ENCODE measurements at regions of chr7 and their contacts with region 1.

Region 1: GRCh38 chr7:23471106-23471859 is 992 bp upstream of the IGF2BP3 start:
- DNase-seq: peak; percentile 72
- ATAC-seq: peak; percentile 55
- H3K4me3 ChIP-seq: peak overlapping the region; percentile 75 to 77
- H3K27ac ChIP-seq: peak overlapping the region; percentile 97
- H3K4me1 ChIP-seq: peaks cover 34 to 49% of the 10 kb centered on the region in 2 experiments
- H3K27me3 ChIP-seq: peaks cover 12% of the 10 kb centered on the region
- CTCF ChIP-seq: no peak
- POLR2A ChIP-seq: no peak
- RAD21 ChIP-seq: no peak

Region 2: GRCh38 chr7:23531794-23532489 is 60.7 kb after region 1 on chr7 and contains the start of gene TRA2A:
- CTCF ChIA-PET with region 1: no interaction called
- POLR2A ChIA-PET with region 1: interaction called, 5 read pairs
- RAD21 ChIA-PET with region 1: no interaction called
- intact Hi-C with region 1: loop called (anchors 2 kb)
- DNase-seq: peak; percentile 89
- ATAC-seq: peak; percentile 94
- H3K4me3 ChIP-seq: peak within 1 kb of the TSS; percentile 71 to 90
- H3K27ac ChIP-seq: peak within 1 kb of the TSS; percentile 72
- H3K4me1 ChIP-seq: peaks cover 12 to 29% of the 10 kb centered on the region in 2 experiments
- H3K27me3 ChIP-seq: no peaks in the 10 kb centered on the region
- CTCF ChIP-seq: no peak
- POLR2A ChIP-seq: peak; percentile 95
- RAD21 ChIP-seq: no peak
- total RNA-seq, gene TRA2A: 122 TPM

Measured in HCT116 (cell line).